Endothelial cell of umbilical vein (primary cell): ENCODE measurements at regions of chr3 and their contacts with region 1.

Region 1: DNA sequence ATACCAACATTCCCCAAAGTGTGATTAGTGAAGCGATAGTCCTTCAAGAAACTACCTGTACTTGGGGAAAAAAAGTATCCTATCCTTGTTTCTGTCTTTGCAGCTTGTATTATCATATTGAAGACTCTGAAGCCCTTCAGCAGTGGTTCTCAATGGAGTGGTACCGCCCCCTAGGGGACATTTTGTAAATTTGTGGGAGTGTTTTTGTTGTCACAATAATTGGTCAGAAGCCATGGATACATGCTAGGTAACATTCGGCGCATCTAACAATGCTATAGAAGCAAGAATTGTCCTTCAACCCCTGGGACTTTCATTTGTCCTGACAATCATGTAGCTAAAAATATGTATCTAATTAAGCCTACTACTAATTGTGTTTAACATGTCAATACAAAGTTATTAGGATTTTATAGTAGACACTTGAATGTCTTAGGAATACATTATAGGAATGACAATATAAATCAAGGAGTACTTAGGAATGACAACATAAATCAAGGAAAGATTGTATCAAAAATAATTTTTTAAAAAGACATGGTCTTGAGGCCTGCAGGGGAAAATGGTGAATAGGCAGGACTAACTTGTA is 53.7 kb downstream of the NMD3 start:
- DNase-seq: peak; percentile 77
- H3K4me3 ChIP-seq: no peak overlapping the region
- H3K27ac ChIP-seq: no peak overlapping the region
- H3K4me1 ChIP-seq: no peaks in the 10 kb centered on the region
- H3K27me3 ChIP-seq: no peaks in the 10 kb centered on the region
- CTCF ChIP-seq: peak; percentile 54 to 64
- POLR2A ChIP-seq: no peak

Region 2: GRCh38 chr3:160616716-160617115 is 658.1 kb before region 1 on chr3:
- CTCF ChIA-PET with region 1: no interaction called
- POLR2A ChIA-PET with region 1: no interaction called
- dilution Hi-C with region 1: no loop called
- intact Hi-C with region 1: no loop called
- DNase-seq: peak; percentile 5
- H3K4me3 ChIP-seq: no peak overlapping the region
- H3K27ac ChIP-seq: no peak overlapping the region
- H3K4me1 ChIP-seq: no peaks in the 10 kb centered on the region
- H3K27me3 ChIP-seq: peaks cover 3 to 14% of the 10 kb centered on the region in 2 experiments
- CTCF ChIP-seq: no peak
- POLR2A ChIP-seq: no peak

Region 3: DNA sequence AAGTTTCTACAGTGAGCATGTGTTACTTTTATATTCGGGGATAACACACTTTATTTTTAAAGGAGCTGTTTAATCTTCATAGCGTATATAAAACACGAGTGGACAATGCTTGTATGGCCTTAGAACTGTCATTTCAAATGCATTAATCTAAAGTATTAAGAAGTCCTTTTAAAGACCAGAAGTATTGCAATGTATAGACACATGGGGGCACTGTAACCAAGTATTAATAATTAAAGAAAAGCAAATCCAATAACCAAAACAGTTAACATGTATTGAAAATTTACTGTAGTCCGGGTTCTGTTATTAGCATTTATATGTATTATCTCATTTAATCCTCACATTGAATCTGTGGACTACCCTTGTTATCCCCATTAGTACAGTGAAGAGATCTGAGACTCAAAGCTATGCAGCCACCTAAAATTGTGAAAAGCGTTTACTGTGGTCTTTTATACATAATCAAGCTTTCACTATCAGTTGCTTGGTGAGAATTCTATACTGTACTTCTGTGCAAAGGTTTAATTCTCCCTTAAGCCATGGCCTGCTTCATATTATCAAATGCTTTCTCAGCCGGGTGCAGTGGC is 587.8 kb before region 1 on chr3:
- CTCF ChIA-PET with region 1: interaction called, 18 read pairs
- POLR2A ChIA-PET with region 1: no interaction called
- dilution Hi-C with region 1: no loop called
- intact Hi-C with region 1: no loop called
- DNase-seq: peak; percentile 39
- H3K4me3 ChIP-seq: no peak overlapping the region
- H3K27ac ChIP-seq: no peak overlapping the region
- H3K4me1 ChIP-seq: no peaks in the 10 kb centered on the region
- H3K27me3 ChIP-seq: no peaks in the 10 kb centered on the region
- CTCF ChIP-seq: peak; percentile 16 to 18
- POLR2A ChIP-seq: no peak

Region 4: DNA sequence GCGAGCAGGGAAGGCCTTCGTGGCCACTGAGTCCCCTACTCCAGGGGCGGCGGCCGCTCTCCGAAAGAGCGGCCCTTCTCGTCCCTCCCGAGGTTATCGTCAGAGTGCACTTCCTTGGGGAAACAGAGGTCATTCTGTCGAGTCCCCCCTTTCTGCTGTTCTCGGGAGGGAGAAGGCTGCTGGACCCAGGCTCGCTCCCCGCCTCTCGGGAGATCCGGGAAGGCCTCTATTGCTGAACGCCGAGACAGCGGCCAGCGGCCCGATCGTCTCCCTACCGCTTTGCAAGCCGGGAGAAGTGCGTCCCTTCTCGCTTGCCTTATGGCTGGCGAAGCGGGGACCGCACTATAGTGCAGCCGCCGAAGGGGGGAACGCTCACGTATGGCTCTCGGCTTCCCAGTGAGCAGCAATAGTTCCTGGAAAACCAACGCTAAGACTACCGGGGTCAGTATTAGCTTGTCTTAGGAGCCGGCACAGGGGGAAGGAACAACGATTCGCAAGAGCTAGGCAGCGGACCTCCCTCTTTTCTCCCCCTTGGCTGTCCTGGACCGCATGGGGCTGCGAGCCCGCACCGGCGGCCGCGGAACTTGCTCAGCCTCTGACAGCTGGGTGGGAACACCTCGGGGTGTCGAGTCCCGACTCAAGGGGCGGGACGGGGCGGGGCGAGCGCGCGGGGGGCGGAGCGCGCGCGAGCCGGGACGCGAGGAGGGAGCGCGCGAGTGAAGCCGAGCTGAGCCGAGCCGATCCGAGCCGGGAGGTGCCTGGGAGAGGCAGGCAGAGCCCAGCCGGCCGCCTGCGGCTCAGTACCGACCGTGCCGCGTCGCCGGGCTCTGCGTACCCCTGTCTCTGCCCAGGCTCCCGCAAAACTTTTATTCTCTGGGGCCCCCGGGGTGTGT is 519.7 kb before region 1 on chr3:
- CTCF ChIA-PET with region 1: no interaction called
- POLR2A ChIA-PET with region 1: no interaction called
- dilution Hi-C with region 1: no loop called
- intact Hi-C with region 1: loop called (anchors 5 kb)
- DNase-seq: peak; percentile 95
- H3K4me3 ChIP-seq: peak overlapping the region; percentile 49 to 80 (median 71)
- H3K27ac ChIP-seq: peak overlapping the region; percentile 84
- H3K4me1 ChIP-seq: peaks cover 8% of the 10 kb centered on the region
- H3K27me3 ChIP-seq: peaks cover 5 to 13% of the 10 kb centered on the region in 2 experiments
- CTCF ChIP-seq: no peak
- POLR2A ChIP-seq: no peak

Region 5: DNA sequence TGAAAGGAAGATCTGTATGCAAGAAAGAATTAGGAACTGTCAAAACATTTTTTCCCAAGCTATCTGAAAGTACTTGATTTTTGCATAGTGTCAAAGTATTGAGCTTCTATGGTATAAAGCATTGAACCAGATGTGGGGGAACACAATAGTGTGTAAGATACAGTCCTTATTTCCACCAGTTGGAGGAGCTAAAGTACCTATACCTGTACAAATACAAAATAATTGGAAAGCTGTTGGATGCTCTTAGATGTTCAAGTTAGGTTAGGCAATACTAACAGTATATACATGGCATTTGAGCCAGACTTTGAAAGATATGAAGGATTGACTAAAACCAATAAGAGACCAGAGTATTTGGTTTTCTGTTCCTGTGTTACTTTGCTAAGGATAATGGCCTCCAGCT is 318.0 kb before region 1 on chr3:
- CTCF ChIA-PET with region 1: interaction called, 56 read pairs
- POLR2A ChIA-PET with region 1: no interaction called
- dilution Hi-C with region 1: no loop called
- intact Hi-C with region 1: loop called (anchors 1 kb)
- DNase-seq: peak; percentile 50
- H3K4me3 ChIP-seq: no peak overlapping the region
- H3K27ac ChIP-seq: no peak overlapping the region
- H3K4me1 ChIP-seq: no peaks in the 10 kb centered on the region
- H3K27me3 ChIP-seq: no peaks in the 10 kb centered on the region
- CTCF ChIP-seq: peak; percentile 25 to 35
- POLR2A ChIP-seq: no peak

Region 6: GRCh38 chr3:161239703-161240102 is 35.1 kb before region 1 on chr3:
- CTCF ChIA-PET with region 1: interaction called, 12 read pairs
- POLR2A ChIA-PET with region 1: no interaction called
- dilution Hi-C with region 1: no loop called
- intact Hi-C with region 1: no loop called
- DNase-seq: no peak
- H3K4me3 ChIP-seq: no peak overlapping the region
- H3K27ac ChIP-seq: no peak overlapping the region
- H3K4me1 ChIP-seq: no peaks in the 10 kb centered on the region
- H3K27me3 ChIP-seq: no peaks in the 10 kb centered on the region
- CTCF ChIP-seq: no peak
- POLR2A ChIP-seq: no peak

Region 7: DNA sequence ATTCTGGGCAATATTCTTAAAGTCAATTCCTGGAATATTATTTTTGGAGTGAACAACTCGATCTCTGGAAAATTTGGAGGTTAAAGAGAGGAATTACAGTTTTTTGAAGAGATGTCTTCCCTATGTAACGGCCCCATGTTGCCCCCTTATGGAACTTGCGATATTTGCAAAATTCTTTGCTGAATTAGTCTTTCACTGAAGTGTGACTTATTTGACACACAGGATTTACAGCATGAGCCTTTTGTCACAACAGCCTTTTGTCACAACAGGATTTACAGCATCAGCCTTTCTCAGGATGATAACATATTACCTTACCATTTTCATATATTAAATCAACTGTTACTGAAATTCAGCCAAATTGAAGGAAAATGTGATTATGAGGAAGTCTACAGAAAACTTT is 134.3 kb after region 1 on chr3:
- CTCF ChIA-PET with region 1: interaction called, 29 read pairs
- POLR2A ChIA-PET with region 1: no interaction called
- dilution Hi-C with region 1: no loop called
- intact Hi-C with region 1: loop called (anchors 1 kb)
- DNase-seq: peak; percentile 61
- H3K4me3 ChIP-seq: no peak overlapping the region
- H3K27ac ChIP-seq: no peak overlapping the region
- H3K4me1 ChIP-seq: no peaks in the 10 kb centered on the region
- H3K27me3 ChIP-seq: no peaks in the 10 kb centered on the region
- CTCF ChIP-seq: peak; percentile 48 to 51
- POLR2A ChIP-seq: no peak

Region 8: GRCh38 chr3:161423911-161424522 is 149.2 kb after region 1 on chr3:
- CTCF ChIA-PET with region 1: interaction called, 61 read pairs
- POLR2A ChIA-PET with region 1: no interaction called
- dilution Hi-C with region 1: no loop called
- intact Hi-C with region 1: loop called (anchors 1 kb)
- DNase-seq: peak; percentile 44
- H3K4me3 ChIP-seq: no peak overlapping the region
- H3K27ac ChIP-seq: no peak overlapping the region
- H3K4me1 ChIP-seq: peaks cover 5% of the 10 kb centered on the region
- H3K27me3 ChIP-seq: peaks cover 1 to 5% of the 10 kb centered on the region in 2 experiments
- CTCF ChIP-seq: peak in 1 of 2 donors; percentile 40
- POLR2A ChIP-seq: no peak